ENCODE measurements at regions of chr2 and their contacts with region 1.

Region 1: DNA sequence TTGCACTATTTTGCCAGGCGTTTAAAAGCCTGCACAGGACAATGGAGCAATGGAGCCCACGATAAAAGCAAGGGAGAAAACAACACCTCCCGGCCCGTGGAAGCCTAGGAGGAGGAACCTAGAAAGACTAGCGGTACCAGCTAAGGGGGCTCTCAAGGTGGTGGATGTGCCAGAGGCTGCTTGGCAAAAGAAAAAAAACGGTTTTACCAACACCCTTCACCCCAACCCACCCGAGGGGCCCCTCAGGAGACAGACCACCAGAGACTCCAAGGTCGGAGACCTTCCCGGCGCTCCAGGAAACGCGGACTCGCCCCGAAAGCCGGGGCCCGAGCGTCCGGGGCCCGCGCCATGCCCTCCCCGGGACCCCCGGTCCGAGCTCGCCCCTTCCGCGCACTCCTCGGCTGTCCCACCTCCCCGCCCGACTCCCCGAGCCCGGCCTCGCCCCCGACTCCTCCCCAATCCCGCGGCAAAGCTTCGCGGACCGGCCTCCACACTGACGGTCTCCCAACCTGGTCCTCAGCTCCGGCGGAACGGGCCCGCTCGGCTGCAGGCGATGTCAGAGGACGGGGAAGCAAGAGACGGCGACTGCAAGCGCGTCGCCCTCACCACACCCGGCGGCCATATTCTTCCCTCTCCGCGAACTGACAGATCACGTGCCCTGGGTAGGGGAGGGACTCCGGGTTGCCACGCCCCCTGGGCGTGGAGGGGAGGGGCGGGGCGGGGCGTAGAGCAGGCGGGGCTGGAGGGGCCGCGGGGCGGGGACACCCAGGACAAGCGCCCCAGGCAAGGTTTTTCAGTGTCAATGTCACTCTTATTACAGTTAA is at the start of gene KIDINS220:
- DNase-seq: peak; percentile 92
- H3K4me3 ChIP-seq: peak within 1 kb of the TSS; percentile 77 to 99 (median 97)
- H3K27ac ChIP-seq: peak within 1 kb of the TSS; percentile 81 to 92 (median 90)
- H3K4me1 ChIP-seq: peaks cover 0 to 48% (median 45%) of the 10 kb centered on the region in 4 donors
- H3K27me3 ChIP-seq: no peaks in the 10 kb centered on the region
- CTCF ChIP-seq: no peak
- EP300 ChIP-seq: no peak
- POLR2A ChIP-seq: peak; percentile 78 to 82
- total RNA-seq, gene KIDINS220: 85.7 to 111 (median 95.0) TPM

Region 2: DNA sequence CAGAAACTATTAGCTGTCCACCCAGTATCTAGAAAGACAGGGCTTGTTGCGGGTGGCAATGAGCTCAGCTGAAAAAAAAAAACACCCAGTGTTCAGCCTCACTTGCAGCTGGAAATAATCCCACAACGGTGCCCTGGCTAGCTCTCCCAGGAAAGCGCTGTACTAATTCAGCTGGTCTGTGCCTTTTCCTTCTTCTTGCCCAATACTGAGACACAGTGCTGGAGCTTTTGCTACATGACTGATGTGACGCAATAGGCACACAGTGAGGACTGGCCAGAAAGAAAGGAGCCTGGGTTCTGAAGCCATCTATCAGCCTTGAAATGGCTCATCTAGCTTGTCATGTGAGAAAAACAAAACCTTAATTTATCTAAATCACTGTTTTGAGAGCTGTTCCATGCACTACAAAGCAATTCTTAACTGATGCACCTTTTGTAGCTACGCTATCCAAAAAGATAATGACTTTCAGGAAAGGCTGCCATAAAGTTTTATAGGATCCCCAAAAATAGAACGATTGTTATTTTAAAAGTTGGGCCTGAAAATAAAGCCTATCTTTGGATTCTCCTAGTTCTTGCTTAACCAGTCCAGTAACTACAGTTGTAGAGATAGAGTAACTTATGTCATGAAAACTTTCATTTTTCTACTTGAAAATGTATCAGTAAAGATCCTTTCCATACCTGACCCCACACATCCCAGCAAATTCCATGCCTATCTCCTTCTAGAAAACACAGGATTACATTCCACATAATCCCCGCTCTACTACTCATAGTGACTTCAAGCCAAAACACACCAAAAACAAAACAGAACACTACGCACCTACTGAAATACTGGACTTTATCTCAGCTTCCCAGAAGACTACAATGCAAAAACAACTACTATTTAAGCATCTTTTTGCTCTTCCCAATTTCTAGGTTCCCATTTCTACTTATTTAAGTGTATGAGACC is 15.6 kb before region 1 on chr2:
- intact Hi-C with region 1: loop called (anchors 2 kb)
- DNase-seq: peak; percentile 90
- H3K4me3 ChIP-seq: no peak overlapping the region
- H3K27ac ChIP-seq: peak overlapping the region; percentile 48 to 81 (median 70)
- H3K4me1 ChIP-seq: peaks cover 0 to 35% (median 25%) of the 10 kb centered on the region in 4 donors
- H3K27me3 ChIP-seq: no peaks in the 10 kb centered on the region
- CTCF ChIP-seq: no peak
- EP300 ChIP-seq: peak in 3 of 4 donors; percentile 10 to 61 (median 29)
- POLR2A ChIP-seq: no peak

Measured in sigmoid colon (tissue), 7 donors.